ENCODE measurements at regions of chr16 and their contacts with region 1.

Region 1: GRCh38 chr16:60636117-60636516 is 1400.1 kb downstream of the CDH8 start:
- DNase-seq: no peak
- ATAC-seq: no peak
- H3K4me3 ChIP-seq: no peak overlapping the region
- H3K4me3 Mint-ChIP-seq: no peak overlapping the region
- H3K27ac ChIP-seq: no peak overlapping the region
- H3K27ac Mint-ChIP-seq: no peak overlapping the region
- H3K4me1 ChIP-seq: no peaks in the 10 kb centered on the region
- H3K4me1 Mint-ChIP-seq: no peaks in the 10 kb centered on the region
- H3K27me3 ChIP-seq: no peaks in the 10 kb centered on the region
- H3K27me3 Mint-ChIP-seq: no peaks in the 10 kb centered on the region
- CTCF ChIP-seq: no peak

Region 2: GRCh38 chr16:60582528-60582927 is 53.6 kb before region 1 on chr16:
- CTCF ChIA-PET with region 1: no interaction called
- POLR2A ChIA-PET with region 1: no interaction called
- intact Hi-C with region 1: loop called in 1 of 2 experiments (anchors 5 kb)
- DNase-seq: no peak
- ATAC-seq: no peak
- H3K4me3 ChIP-seq: no peak overlapping the region
- H3K4me3 Mint-ChIP-seq: no peak overlapping the region
- H3K27ac ChIP-seq: no peak overlapping the region
- H3K27ac Mint-ChIP-seq: no peak overlapping the region
- H3K4me1 ChIP-seq: no peaks in the 10 kb centered on the region
- H3K4me1 Mint-ChIP-seq: no peaks in the 10 kb centered on the region
- H3K27me3 ChIP-seq: no peaks in the 10 kb centered on the region
- H3K27me3 Mint-ChIP-seq: no peaks in the 10 kb centered on the region
- CTCF ChIP-seq: no peak

Region 3: DNA sequence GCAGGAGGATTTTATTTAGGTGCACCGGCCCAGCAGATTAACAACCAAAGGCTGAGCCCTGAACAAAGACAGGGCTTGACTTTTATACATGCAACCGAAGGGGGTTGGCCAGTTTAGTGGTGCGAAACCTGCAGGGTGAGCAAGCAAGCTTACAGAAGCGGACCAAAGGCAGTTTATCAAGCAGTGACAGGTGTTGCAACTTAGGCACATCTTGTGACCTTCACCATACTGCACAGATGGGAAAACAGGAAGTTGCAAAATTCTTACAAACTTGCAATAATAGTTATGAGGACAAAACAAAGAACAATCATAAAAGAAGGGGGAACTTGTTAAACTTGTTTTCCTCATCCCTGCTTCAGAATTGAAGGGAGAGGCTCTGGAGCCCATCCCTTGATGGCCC is 135.0 kb after region 1 on chr16:
- CTCF ChIA-PET with region 1: no interaction called
- POLR2A ChIA-PET with region 1: no interaction called
- intact Hi-C with region 1: no loop called
- DNase-seq: no peak
- ATAC-seq: no peak
- H3K4me3 ChIP-seq: no peak overlapping the region
- H3K4me3 Mint-ChIP-seq: no peak overlapping the region
- H3K27ac ChIP-seq: no peak overlapping the region
- H3K27ac Mint-ChIP-seq: no peak overlapping the region
- H3K4me1 ChIP-seq: no peaks in the 10 kb centered on the region
- H3K4me1 Mint-ChIP-seq: no peaks in the 10 kb centered on the region
- H3K27me3 ChIP-seq: no peaks in the 10 kb centered on the region
- H3K27me3 Mint-ChIP-seq: no peaks in the 10 kb centered on the region
- CTCF ChIP-seq: no peak